PC-3 (cell line): ENCODE measurements at regions of chr14 and their contacts with region 1.

Region 1: DNA sequence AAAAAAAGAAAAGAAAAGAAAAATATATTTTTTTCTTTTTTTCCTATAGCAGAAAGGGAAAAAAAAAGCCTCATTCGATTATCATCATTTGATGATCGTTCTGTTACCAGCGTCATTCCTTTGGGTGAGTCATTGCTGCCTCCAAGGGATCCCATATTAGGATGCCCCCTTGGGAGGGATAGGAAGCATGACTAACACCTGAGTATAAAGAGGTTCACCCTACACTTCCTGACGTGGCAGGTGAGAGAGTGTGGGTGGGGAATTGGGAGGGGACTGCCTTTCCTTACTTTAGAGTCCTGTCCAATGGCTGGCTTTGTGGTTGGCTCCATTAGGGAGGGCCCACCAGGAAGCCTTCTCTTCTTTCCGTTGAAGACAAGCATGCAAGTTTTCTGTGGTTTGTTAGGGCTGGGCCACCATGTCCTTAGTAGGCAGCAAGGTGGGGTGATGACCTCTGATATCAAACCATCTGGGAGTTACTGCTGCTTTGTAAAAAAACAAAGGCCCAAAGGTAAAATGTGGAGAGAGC is 56.1 kb upstream of the FUT8 start:
- DNase-seq: peak; percentile 100
- ATAC-seq: peak; percentile 83
- H3K4me3 ChIP-seq: peak overlapping the region; percentile 13; the same call in 1 of the 2 replicates
- H3K27ac ChIP-seq: peak overlapping the region; percentile 97
- H3K4me1 ChIP-seq: peaks cover 68% of the 10 kb centered on the region
- H3K27me3 ChIP-seq: no peaks in the 10 kb centered on the region
- CTCF ChIP-seq: no peak

Region 2: DNA sequence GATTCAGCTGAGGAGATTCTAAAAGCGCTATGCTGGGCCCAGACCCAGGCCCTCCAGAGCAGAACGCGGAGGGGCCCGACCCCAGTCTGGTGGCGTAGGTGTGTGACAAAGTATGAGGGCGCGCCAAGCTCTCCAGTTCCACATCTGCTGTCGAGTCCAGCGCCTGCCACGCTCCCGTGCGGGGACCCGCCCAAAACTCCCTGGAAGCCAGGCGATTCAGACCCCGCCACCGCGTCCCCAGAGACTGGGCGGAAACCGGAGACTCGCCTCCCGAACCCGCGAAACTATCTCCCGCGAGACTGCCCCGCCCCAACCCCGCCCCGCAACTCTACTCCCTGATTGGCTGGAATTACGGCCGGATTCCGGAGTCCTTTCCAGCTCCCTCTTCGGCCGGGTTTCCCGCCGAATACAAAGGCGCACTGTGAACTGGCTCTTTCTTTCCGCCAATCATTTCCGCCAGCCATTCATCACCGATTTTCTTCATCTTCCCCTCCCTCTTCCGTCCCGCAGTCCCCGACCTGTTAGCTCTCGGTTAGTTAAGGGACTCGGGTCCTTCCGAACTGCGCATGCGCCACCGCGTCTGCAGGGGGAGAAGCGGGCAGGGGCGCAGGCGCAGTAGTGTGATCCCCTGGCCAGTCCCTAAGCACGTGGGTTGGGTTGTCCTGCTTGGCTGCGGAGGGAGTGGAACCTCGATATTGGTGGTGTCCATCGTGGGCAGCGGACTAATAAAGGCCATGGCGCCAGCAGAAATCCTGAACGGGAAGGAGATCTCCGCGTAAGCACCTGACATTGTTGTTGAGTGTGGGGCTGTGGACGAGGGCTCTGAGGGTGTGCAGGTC is 968.5 kb before region 1 on chr14 and contains the start of gene MTHFD1:
- CTCF ChIA-PET with region 1: no interaction called
- POLR2A ChIA-PET with region 1: interaction called, 11 read pairs
- intact Hi-C with region 1: no loop called
- DNase-seq: peak; percentile 99
- ATAC-seq: peak; percentile 84
- H3K4me3 ChIP-seq: peak within 1 kb of the TSS; percentile 80
- H3K27ac ChIP-seq: peak within 1 kb of the TSS; percentile 48
- H3K4me1 ChIP-seq: peaks cover 11% of the 10 kb centered on the region; the same call in 1 of the 2 replicates
- H3K27me3 ChIP-seq: no peaks in the 10 kb centered on the region
- CTCF ChIP-seq: no peak
- total RNA-seq, gene MTHFD1: 89.3 and 103 TPM in 2 replicates

Region 3: DNA sequence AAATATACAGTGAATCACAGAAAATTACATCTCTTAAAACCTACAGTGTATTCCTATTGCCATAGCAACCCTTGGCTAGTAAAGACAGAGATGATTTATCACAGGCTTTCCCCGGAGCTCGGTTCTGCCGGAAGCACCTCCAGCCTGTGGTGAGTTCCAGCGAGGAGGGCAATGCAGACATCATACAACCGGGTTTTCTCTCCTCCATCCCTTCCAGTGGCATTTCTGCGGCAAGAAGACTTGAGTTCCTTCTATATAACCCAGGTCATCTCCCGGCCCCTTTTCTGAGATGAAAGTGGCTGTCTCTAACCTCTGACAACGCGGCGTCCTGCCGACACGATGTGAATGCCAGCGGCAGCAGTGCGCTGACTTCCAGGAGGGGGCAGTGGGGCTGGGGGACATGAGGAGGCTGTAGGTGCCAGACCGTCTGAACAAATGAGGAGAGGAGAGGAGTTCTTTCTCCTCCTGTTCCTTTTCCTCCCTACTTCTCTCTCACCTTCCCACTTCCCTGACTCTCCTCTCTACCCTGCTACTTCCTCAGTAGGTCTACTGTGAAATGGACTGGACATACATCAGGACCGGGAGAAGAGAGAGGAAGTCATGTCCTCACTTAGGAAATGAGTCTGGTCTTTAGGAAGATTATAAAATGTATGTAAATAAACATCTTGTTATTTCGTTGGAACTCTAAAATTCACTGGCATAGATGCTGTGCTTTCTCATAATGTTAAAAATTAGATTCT is 185.5 kb before region 1 on chr14:
- CTCF ChIA-PET with region 1: interaction called, 3 read pairs
- POLR2A ChIA-PET with region 1: interaction called, 5 read pairs
- intact Hi-C with region 1: loop called (anchors 1 kb)
- DNase-seq: peak; percentile 80
- ATAC-seq: peak; percentile 86
- H3K4me3 ChIP-seq: peak overlapping the region; percentile 65
- H3K27ac ChIP-seq: peak overlapping the region; percentile 56
- H3K4me1 ChIP-seq: peaks cover 18% of the 10 kb centered on the region
- H3K27me3 ChIP-seq: no peaks in the 10 kb centered on the region
- CTCF ChIP-seq: peak; percentile 76

Region 4: GRCh38 chr14:65255536-65256461 is 100.6 kb before region 1 on chr14:
- CTCF ChIA-PET with region 1: no interaction called
- POLR2A ChIA-PET with region 1: no interaction called
- intact Hi-C with region 1: loop called (anchors 1 kb)
- DNase-seq: peak; percentile 95
- ATAC-seq: peak; percentile 62
- H3K4me3 ChIP-seq: peak overlapping the region; percentile 34
- H3K27ac ChIP-seq: peak overlapping the region; percentile 96
- H3K4me1 ChIP-seq: peaks cover 58% of the 10 kb centered on the region
- H3K27me3 ChIP-seq: no peaks in the 10 kb centered on the region
- CTCF ChIP-seq: no peak

Region 5: GRCh38 chr14:65290830-65291229 is 65.6 kb before region 1 on chr14:
- CTCF ChIA-PET with region 1: interaction called, 5 read pairs
- POLR2A ChIA-PET with region 1: no interaction called
- intact Hi-C with region 1: loop called (anchors 1 kb)
- DNase-seq: peak; percentile 99
- ATAC-seq: peak; percentile 95
- H3K4me3 ChIP-seq: no peak overlapping the region
- H3K27ac ChIP-seq: peak overlapping the region; percentile 96
- H3K4me1 ChIP-seq: peaks cover 20% of the 10 kb centered on the region
- H3K27me3 ChIP-seq: no peaks in the 10 kb centered on the region
- CTCF ChIP-seq: no peak

Region 6: GRCh38 chr14:65321370-65321875 is 35.0 kb before region 1 on chr14:
- CTCF ChIA-PET with region 1: no interaction called
- POLR2A ChIA-PET with region 1: interaction called, 5 read pairs
- intact Hi-C with region 1: loop called (anchors 1 kb)
- DNase-seq: peak; percentile 98
- ATAC-seq: peak; percentile 92
- H3K4me3 ChIP-seq: no peak overlapping the region
- H3K27ac ChIP-seq: peak overlapping the region; percentile 99
- H3K4me1 ChIP-seq: peaks cover 45% of the 10 kb centered on the region
- H3K27me3 ChIP-seq: no peaks in the 10 kb centered on the region
- CTCF ChIP-seq: no peak